ENCODE measurements at regions of chr1 and their contacts with region 1.

Region 1: GRCh38 chr1:45569962-45570581 is 13.8 kb upstream of the NASP start:
- DNase-seq: peak; percentile 67 to 86 (median 74)
- ATAC-seq: peak; percentile 87
- H3K4me3 ChIP-seq: no peak overlapping the region
- H3K27ac ChIP-seq: no peak overlapping the region
- H3K4me1 ChIP-seq: peaks cover 11 to 22% of the 10 kb centered on the region in 2 experiments
- H3K27me3 ChIP-seq: no peaks in the 10 kb centered on the region
- CTCF ChIP-seq: peak; percentile 95 to 99 (median 98)
- EP300 ChIP-seq: 0 out of 2 replicates have a peak, but pooled peaks have one; percentile 8
- POLR2A ChIP-seq: no peak
- RAD21 ChIP-seq: peak; percentile 94 to 97

Region 2: GRCh38 chr1:45359882-45360513 is 210.1 kb before region 1 on chr1:
- CTCF ChIA-PET with region 1: interaction called, 13 read pairs
- POLR2A ChIA-PET with region 1: no interaction called
- in situ Hi-C with region 1: loop called (anchors 5 kb)
- intact Hi-C with region 1: loop called (anchors 2 kb)
- DNase-seq: peak; percentile 28 to 80 (median 38)
- ATAC-seq: peak; percentile 84
- H3K4me3 ChIP-seq: no peak overlapping the region
- H3K27ac ChIP-seq: no peak overlapping the region
- H3K4me1 ChIP-seq: peaks cover 0 to 3% of the 10 kb centered on the region in 2 experiments; a peak in 2 of 5 replicates
- H3K27me3 ChIP-seq: no peaks in the 10 kb centered on the region
- CTCF ChIP-seq: peak; percentile 74 to 96 (median 78)
- EP300 ChIP-seq: no peak
- POLR2A ChIP-seq: no peak
- RAD21 ChIP-seq: peak; percentile 93 to 98

Region 3: GRCh38 chr1:45512641-45513054 is 57.4 kb before region 1 on chr1:
- CTCF ChIA-PET with region 1: interaction called, 21 read pairs
- POLR2A ChIA-PET with region 1: interaction called, 12 read pairs
- in situ Hi-C with region 1: loop called (anchors 5 kb)
- intact Hi-C with region 1: loop called (anchors 1 kb)
- DNase-seq: peak; percentile 57 to 88 (median 67)
- ATAC-seq: peak; percentile 78
- H3K4me3 ChIP-seq: no peak overlapping the region
- H3K27ac ChIP-seq: no peak overlapping the region
- H3K4me1 ChIP-seq: no peaks in the 10 kb centered on the region; a peak in 1 of 5 replicates
- H3K27me3 ChIP-seq: no peaks in the 10 kb centered on the region
- CTCF ChIP-seq: peak; percentile 84 to 89 (median 86)
- EP300 ChIP-seq: no peak
- POLR2A ChIP-seq: no peak
- RAD21 ChIP-seq: peak; percentile 87 to 95

Measured in K562 (cell line).